Posterior vena cava (tissue), 2 donors: ENCODE measurements at regions of chr21 and their contacts with region 1.

Region 1: GRCh38 chr21:41847066-41847804 is 31.9 kb downstream of the PRDM15 start:
- DNase-seq: no peak

Region 2: DNA sequence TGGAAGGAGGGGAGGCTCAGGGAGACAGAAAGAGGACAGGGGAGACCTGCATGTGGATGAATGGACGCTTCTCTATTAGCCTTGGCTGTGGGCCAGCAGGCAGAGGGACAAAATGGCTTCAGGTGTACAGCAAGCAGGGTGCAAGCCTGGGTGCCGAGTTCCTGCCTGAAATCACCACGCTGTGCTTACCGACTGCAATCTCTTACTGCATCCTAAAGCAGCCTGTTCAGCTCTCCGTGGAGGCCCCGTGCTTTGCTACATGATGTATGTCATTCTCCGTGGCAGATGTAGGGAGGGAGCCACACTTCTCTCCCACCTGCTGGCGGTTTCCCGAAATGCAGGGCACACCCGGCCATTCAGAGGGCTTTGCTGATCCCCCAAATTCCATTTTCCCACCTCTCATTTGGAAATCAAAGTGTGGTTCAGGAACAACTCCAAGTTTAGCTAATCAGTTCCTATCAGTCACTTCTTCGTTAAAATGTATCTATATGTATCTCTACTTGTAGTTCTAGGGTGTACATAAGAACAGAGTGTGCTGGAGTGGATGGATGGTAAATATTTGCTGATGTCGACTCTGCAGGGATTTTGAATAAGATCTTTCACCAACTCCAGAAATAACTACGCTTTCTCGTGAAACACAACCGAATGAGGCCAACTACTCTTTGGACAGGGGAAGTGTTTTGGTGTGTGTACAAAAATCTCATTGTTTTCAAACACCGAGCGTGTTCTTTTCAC is 801.5 kb before region 1 on chr21:
- intact Hi-C with region 1: no loop called
- DNase-seq: no peak

Region 3: GRCh38 chr21:41867313-41867712 is 20.1 kb after region 1 on chr21:
- intact Hi-C with region 1: loop called in 1 of 2 experiments (anchors 1 kb)
- DNase-seq: no peak